ENCODE measurements at regions of chr12 and their contacts with region 1.

Region 1: DNA sequence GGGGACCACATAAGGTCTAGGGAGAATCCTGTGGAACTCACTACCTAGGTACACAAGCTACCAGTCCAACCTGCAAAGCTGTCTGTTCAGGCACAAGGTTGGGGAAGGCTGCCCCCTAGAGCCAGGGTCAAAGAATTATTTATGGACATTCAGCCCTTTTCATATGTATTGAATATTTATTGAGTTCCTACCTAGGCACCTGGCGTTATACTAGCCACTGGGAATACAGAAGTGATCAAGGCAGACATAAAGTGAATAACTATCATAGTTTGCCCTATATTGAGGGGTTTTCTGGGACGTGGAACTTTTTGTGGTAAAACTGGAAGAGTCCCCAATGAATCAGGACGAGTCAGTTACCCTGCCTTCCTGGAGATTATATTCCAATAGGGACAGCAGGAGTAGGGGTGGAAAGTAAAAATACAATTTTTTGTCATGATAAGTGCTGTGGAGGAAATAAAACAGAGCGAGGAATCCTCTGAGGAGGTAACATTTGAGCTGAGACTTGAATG is 5.8 kb upstream of the SLC48A1 start:
- DNase-seq: peak in 1 of 2 experiments; percentile 55
- H3K4me3 ChIP-seq: no peak overlapping the region
- H3K27ac ChIP-seq: no peak overlapping the region
- H3K4me1 ChIP-seq: peaks cover 70% of the 10 kb centered on the region
- H3K27me3 ChIP-seq: no peaks in the 10 kb centered on the region
- CTCF ChIP-seq: peak; percentile 72

Region 2: DNA sequence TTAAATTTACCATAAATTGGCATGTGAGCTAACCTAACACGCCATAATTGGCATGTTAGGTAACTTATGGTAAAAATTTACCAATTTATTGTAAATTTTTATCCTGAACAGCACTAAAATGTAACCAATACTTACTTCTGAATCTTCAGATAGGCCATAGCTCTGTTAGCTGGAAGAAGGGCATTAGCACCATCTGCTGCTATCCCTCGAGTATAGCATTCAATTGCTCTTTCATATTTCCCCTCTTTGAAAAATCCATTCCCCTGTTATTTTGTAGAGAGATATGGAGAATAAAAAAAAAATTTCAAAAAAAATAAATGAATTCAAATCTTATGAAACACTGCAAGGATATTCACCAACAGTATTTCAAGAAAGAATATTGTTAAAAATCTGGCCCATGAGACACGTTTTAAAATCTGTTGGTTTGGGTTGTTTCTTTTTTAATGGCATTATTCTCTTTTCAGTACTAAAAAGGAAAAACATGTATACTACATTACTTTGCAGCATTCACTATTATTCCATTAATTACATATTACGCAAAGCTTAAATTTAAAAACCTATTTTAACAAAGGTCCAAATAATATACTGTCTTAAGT is 80.5 kb before region 1 on chr12:
- CTCF ChIA-PET with region 1: no interaction called
- POLR2A ChIA-PET with region 1: no interaction called
- intact Hi-C with region 1: no loop called
- DNase-seq: peak in 1 of 2 experiments; percentile 38
- H3K4me3 ChIP-seq: no peak overlapping the region
- H3K27ac ChIP-seq: no peak overlapping the region
- H3K4me1 ChIP-seq: no peaks in the 10 kb centered on the region
- H3K27me3 ChIP-seq: no peaks in the 10 kb centered on the region
- CTCF ChIP-seq: peak; percentile 80

Region 3: GRCh38 chr12:47742253-47742825 is 24.9 kb before region 1 on chr12:
- CTCF ChIA-PET with region 1: interaction called, 29 read pairs
- POLR2A ChIA-PET with region 1: interaction called, 3 read pairs
- intact Hi-C with region 1: loop called (anchors 1 kb)
- DNase-seq: peak in 1 of 2 experiments; percentile 66
- H3K4me3 ChIP-seq: no peak overlapping the region
- H3K27ac ChIP-seq: no peak overlapping the region
- H3K4me1 ChIP-seq: peaks cover 8% of the 10 kb centered on the region
- H3K27me3 ChIP-seq: no peaks in the 10 kb centered on the region
- CTCF ChIP-seq: peak; percentile 100

Region 4: DNA sequence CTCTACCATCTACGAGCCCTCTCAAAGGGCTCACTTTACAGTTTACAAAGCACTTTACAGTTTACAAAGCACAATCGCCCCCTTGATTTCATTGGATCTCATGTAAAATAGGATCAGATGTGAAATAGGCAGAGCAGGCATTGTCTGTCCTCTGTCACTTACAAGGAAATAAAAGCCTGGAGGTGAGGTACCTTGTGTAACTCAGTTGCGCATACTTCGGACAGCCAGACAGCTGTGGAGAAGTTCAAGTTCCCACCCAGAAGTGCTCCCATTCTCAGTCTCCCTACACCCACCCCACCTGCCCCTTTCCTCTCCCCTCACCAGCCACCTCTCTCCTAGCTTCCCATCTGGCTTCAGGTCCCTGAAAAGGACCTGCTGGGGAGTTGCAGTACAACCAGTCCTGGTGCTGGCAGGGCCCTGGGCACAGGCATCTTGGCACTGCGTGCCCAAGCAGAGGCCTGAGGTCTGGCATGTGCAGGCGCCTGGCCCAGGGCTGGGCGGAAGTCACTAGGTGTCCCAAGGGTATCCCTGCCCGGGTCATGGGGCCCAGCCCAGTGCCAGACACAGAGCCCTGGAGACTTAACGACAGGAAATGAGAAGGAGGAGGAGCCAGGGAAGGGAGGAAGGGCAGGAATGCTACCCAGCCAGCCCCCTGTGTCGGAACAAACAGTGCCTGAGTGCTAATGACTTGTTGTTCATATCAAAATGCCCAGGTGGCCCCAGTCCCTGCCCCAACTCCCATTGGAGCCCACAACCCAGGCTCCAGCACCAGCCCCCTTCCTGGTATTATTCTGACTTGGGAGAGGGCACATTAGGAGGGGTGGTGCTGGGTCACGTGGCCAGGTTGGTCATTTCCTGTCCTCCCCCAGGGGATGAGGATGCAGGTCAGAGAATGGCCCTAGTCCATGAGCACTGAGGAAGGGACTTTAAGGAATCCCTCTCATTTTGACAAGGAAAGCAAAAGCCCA is 14.0 kb before region 1 on chr12:
- CTCF ChIA-PET with region 1: interaction called, 6 read pairs
- POLR2A ChIA-PET with region 1: interaction called, 3 read pairs
- intact Hi-C with region 1: loop called (anchors 1 kb)
- DNase-seq: peak; percentile 89 to 92
- H3K4me3 ChIP-seq: peak overlapping the region; percentile 29; the same call in 1 of the 2 replicates
- H3K27ac ChIP-seq: peak overlapping the region; percentile 75
- H3K4me1 ChIP-seq: peaks cover 81% of the 10 kb centered on the region
- H3K27me3 ChIP-seq: no peaks in the 10 kb centered on the region
- CTCF ChIP-seq: no peak; the same call in 1 of the 2 replicates

Region 5: DNA sequence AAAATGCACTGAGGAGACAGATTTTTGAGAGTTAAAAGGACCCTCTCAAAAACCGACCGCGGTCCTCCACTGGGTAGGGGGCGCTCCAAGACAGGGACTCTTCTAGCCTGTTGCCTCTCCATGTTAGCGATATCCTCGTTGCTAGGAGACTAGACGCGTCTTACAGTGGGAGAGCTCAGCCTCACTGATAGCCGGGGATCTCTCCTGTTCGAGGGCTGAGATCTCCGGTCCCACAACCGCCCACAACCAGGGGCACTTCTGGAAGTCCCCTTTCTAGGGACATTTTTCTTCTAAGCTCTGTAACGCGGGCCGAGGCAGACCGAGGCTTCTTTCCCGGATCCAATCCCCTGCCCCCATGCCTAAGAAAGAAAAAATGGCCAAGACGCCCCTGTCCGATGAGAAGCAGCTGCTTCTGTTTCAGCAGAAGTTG is 1136.7 kb after region 1 on chr12:
- CTCF ChIA-PET with region 1: interaction called, 11 read pairs
- POLR2A ChIA-PET with region 1: no interaction called
- intact Hi-C with region 1: no loop called
- DNase-seq: peak in 1 of 2 experiments; percentile 54
- H3K4me3 ChIP-seq: no peak overlapping the region
- H3K27ac ChIP-seq: no peak overlapping the region
- H3K4me1 ChIP-seq: no peaks in the 10 kb centered on the region
- H3K27me3 ChIP-seq: no peaks in the 10 kb centered on the region
- CTCF ChIP-seq: peak; percentile 23; the same call in 1 of the 2 replicates